Left lung (tissue), 14 donors: ENCODE measurements at regions of chr10 and their contacts with region 1.

Region 1: GRCh38 chr10:100433253-100434240 is 29.3 kb upstream of the WNT8B start:
- DNase-seq: peak in 3 of 4 donors; percentile 85 to 92 (median 88)
- ATAC-seq: peak; percentile 100
- H3K4me3 ChIP-seq: no peak overlapping the region
- H3K27ac ChIP-seq: no peak overlapping the region
- H3K4me1 ChIP-seq: no peaks in the 10 kb centered on the region
- H3K27me3 ChIP-seq: no peaks in the 10 kb centered on the region
- CTCF ChIP-seq: peak; percentile 97 to 99

Region 2: DNA sequence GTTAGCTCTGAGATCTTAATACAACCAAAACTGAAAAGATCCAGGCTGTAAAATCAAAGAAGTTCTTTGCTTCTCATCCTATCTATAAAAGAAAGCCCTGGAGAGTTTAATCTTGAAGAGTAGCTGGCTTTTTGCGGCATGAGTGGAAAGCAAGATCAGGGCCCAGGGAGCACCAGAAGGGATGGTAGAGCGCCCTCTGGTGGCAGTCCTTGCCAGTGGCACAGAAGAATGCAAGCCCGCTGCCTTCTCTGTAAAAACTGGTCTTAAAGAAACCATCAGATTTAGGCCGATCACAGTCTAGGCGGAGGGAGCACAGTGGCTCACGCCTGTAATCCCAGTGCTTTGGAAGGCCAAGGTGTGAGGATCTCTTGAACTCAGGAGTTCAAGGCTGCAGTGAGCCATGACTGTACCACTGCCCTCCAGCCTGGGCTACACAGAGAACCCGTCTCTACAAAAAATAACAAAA is 387.5 kb before region 1 on chr10:
- intact Hi-C with region 1: no loop called
- DNase-seq: peak; percentile 81 to 93 (median 89)
- ATAC-seq: peak; percentile 95
- H3K4me3 ChIP-seq: no peak overlapping the region
- H3K27ac ChIP-seq: no peak overlapping the region
- H3K4me1 ChIP-seq: peaks cover 0 to 8% of the 10 kb centered on the region in 2 donors
- H3K27me3 ChIP-seq: no peaks in the 10 kb centered on the region
- CTCF ChIP-seq: peak; percentile 94 to 98

Region 3: DNA sequence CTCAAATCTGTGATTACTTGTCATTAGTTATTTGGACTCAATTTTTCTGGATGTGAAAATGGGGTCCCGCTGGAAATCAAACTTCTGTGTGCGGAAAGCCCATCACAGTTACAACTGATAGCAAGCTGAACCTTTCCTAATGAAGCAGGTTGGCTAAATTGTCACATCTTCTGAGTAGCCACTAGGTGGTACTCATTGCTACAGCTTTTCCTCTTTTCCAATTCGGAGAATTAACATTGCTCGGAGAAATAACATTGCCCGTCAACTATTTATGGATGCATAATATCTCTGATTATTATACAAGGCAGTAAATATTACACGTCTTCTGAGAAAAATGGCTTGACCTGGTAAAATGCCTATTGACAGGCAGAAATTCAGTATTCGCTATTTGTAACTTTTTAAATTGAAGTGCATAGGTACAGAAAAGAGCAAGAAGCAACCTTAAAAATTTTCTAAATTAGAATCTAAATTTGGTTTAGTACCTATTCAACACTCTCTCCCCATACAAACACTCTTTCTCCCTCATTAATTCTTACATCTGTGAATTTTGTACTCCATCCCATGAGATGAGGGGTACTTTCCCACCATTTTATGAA is 129.7 kb before region 1 on chr10:
- intact Hi-C with region 1: loop called in 1 of 2 experiments (anchors 10 kb)
- DNase-seq: no peak
- ATAC-seq: peak; percentile 70
- H3K4me3 ChIP-seq: no peak overlapping the region
- H3K27ac ChIP-seq: no peak overlapping the region
- H3K4me1 ChIP-seq: no peaks in the 10 kb centered on the region
- H3K27me3 ChIP-seq: peaks cover 0 to 26% of the 10 kb centered on the region in 2 donors
- CTCF ChIP-seq: peak; percentile 34 to 43

Region 4: DNA sequence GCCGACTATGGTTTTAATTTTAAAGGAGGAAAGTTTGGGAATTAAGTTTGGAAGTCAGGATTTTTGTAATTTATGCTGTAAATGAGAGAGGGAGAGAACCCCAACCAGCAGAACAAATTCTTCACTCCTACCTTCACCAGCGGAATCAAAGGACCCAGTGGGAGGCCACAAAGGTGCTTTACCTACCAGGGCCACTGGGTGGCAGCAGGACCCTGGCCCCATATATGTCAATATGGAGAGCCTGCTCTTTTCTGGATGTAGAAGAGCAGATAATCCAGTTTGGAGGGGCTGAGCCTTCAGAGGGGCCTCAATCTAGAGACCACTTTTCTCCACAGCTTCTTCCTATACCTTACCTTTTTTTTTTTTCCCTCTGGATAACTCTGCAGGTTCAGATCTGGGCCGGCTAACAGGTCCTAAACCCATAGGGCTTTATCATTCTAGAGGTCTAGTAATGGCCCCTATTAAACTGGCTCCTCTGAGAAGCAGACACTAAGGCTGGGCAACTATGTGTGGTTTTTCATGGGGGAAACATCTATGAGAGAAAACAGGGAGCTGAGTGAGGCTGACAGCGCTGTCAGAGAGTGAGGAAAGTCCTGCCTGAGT is 95.0 kb before region 1 on chr10:
- intact Hi-C with region 1: loop called (anchors 5 to 10 kb)
- DNase-seq: peak; percentile 56 to 87 (median 72)
- ATAC-seq: peak; percentile 84
- H3K4me3 ChIP-seq: no peak overlapping the region
- H3K27ac ChIP-seq: no peak overlapping the region
- H3K4me1 ChIP-seq: peaks cover 0 to 19% of the 10 kb centered on the region in 2 donors
- H3K27me3 ChIP-seq: no peaks in the 10 kb centered on the region
- CTCF ChIP-seq: peak; percentile 76 to 91

Region 5: DNA sequence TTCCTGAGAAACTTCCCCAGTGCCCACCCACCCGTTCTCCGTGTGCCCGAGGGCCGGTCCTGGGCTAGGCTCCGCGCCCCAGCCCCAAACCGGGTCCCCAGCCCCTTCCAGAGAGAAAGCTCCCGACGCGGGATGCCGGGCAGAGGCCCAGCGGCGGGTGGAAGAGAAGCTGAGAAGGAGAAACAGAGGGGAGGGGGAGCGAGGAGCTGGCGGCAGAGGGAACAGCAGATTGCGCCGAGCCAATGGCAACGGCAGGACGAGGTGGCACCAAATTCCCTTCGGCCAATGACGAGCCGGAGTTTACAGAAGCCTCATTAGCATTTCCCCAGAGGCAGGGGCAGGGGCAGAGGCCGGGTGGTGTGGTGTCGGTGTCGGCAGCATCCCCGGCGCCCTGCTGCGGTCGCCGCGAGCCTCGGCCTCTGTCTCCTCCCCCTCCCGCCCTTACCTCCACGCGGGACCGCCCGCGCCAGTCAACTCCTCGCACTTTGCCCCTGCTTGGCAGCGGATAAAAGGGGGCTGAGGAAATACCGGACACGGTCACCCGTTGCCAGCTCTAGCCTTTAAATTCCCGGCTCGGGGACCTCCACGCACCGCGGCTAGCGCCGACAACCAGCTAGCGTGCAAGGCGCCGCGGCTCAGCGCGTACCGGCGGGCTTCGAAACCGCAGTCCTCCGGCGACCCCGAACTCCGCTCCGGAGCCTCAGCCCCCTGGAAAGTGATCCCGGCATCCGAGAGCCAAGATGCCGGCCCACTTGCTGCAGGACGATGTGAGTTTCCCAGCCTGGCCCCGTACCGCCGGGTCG is 86.6 kb before region 1 on chr10 and contains the start of gene SCD:
- intact Hi-C with region 1: loop called (anchors 5 to 10 kb)
- DNase-seq: peak; percentile 49 to 94 (median 82)
- ATAC-seq: peak; percentile 88
- H3K4me3 ChIP-seq: peak within 1 kb of the TSS; percentile 54 to 82
- H3K27ac ChIP-seq: peak within 1 kb of the TSS; percentile 71 to 78
- H3K4me1 ChIP-seq: peaks cover 0 to 44% of the 10 kb centered on the region in 2 donors
- H3K27me3 ChIP-seq: peaks cover 0 to 9% of the 10 kb centered on the region in 2 donors
- CTCF ChIP-seq: no peak
- polyA plus RNA-seq, gene SCD: 17.3 to 62.2 (median 27.5) TPM

Region 6: DNA sequence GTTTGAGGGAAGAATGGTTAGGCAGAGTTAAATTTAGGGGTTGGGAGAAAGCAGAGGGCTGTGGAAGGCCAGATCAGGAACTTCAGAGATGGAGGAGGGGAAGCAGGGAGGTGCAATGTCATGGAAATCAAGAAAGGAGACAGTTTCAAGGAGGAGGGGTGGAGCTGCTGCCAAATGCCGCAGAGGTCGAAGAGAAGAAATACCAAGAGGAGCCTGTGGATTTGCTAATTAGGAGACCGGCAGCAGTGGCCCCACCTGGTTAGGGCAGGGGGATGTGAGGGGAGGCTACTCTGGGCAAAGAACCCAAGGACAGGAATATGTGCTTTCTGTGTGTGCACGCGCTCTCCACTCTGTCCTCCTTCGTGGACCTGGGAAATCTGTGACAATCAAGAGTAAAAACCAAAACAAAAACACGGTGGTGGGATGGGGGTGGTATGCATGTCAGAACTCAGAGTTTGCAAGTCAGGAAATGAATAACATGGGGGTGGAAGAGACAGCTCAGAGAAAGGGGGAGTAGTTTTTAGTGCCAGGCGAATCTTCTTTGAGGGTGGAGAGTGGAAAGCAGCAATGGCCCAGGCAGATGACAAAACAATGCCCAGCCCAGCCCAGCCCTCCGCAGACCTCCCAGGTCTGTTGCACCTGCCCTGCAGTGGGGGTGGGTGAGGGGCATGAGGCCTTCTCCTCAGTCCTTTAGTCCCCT is 208.9 kb after region 1 on chr10:
- intact Hi-C with region 1: no loop called
- DNase-seq: no peak
- ATAC-seq: no peak
- H3K4me3 ChIP-seq: no peak overlapping the region
- H3K27ac ChIP-seq: no peak overlapping the region
- H3K4me1 ChIP-seq: no peaks in the 10 kb centered on the region
- H3K27me3 ChIP-seq: peaks cover 16 to 98% of the 10 kb centered on the region in 2 donors
- CTCF ChIP-seq: no peak